Prostate gland (tissue), 2 donors: ENCODE measurements at regions of chr10 and their contacts with region 1.

Region 1: GRCh38 chr10:24331457-24331856 is 122.5 kb downstream of the KIAA1217 start:
- DNase-seq: peak; percentile 91
- H3K4me3 ChIP-seq: no peak overlapping the region
- H3K27ac ChIP-seq: peak overlapping the region; percentile 57 to 59
- H3K4me1 ChIP-seq: no peaks in the 10 kb centered on the region
- H3K27me3 ChIP-seq: no peaks in the 10 kb centered on the region
- CTCF ChIP-seq: peak in 1 of 4 experiments; percentile 2
- POLR2A ChIP-seq: no peak

Region 2: GRCh38 chr10:24277771-24278170 is 53.7 kb before region 1 on chr10:
- intact Hi-C with region 1: loop called (anchors 10 kb)
- DNase-seq: no peak
- H3K4me3 ChIP-seq: no peak overlapping the region
- H3K27ac ChIP-seq: no peak overlapping the region
- H3K4me1 ChIP-seq: no peaks in the 10 kb centered on the region
- H3K27me3 ChIP-seq: no peaks in the 10 kb centered on the region
- CTCF ChIP-seq: no peak
- POLR2A ChIP-seq: no peak